K562 (cell line): ENCODE measurements at regions of chrX and their contacts with region 1.

Region 1: GRCh38 chrX:139967300-139967699 is 2.0 kb upstream of the CXorf66 start:
- DNase-seq: peak; percentile 20 to 37 (median 21)
- ATAC-seq: peak; percentile 67
- H3K4me3 ChIP-seq: no peak overlapping the region
- H3K27ac ChIP-seq: no peak overlapping the region
- H3K4me1 ChIP-seq: no peaks in the 10 kb centered on the region
- H3K27me3 ChIP-seq: no peaks in the 10 kb centered on the region
- CTCF ChIP-seq: peak in 2 of 3 experiments; percentile 50; a peak in 3 of 6 replicates
- EP300 ChIP-seq: no peak
- POLR2A ChIP-seq: no peak
- RAD21 ChIP-seq: peak in 1 of 2 experiments; percentile 39; a peak in 1 of 4 replicates

Region 2: DNA sequence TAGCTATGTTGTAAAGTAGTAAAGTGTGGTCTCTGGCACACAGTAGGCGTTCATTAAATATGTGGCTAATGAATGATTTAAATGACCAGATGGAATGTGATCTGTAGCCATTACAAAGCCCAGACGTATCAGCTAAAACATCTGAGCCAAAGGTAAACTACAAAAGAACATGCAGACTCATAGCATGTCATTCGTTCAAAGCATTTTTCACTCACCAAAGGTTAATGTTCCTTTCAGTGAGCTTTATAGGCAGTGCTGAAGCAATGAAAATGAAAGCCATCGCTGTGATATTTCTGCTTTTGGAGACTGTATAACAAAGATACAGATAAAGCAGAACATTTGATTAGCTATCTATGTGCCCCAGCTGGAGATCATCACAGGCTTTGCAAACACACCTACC is 386.2 kb before region 1 on chrX:
- CTCF ChIA-PET with region 1: no interaction called
- POLR2A ChIA-PET with region 1: no interaction called
- in situ Hi-C with region 1: no loop called
- intact Hi-C with region 1: loop called (anchors 10 kb)
- DNase-seq: no peak
- ATAC-seq: no peak
- H3K4me3 ChIP-seq: no peak overlapping the region
- H3K27ac ChIP-seq: no peak overlapping the region
- H3K4me1 ChIP-seq: no peaks in the 10 kb centered on the region
- H3K27me3 ChIP-seq: no peaks in the 10 kb centered on the region
- CTCF ChIP-seq: no peak
- EP300 ChIP-seq: no peak
- POLR2A ChIP-seq: no peak
- RAD21 ChIP-seq: no peak

Region 3: GRCh38 chrX:139691843-139692505 is 275.3 kb before region 1 on chrX:
- CTCF ChIA-PET with region 1: no interaction called
- POLR2A ChIA-PET with region 1: no interaction called
- in situ Hi-C with region 1: no loop called
- intact Hi-C with region 1: no loop called
- DNase-seq: no peak
- ATAC-seq: peak; percentile 60
- H3K4me3 ChIP-seq: no peak overlapping the region
- H3K27ac ChIP-seq: no peak overlapping the region
- H3K4me1 ChIP-seq: peaks cover 0 to 8% of the 10 kb centered on the region in 2 experiments; a peak in 2 of 5 replicates
- H3K27me3 ChIP-seq: peaks cover 5 to 25% of the 10 kb centered on the region in 2 experiments; a peak in 4 of 5 replicates
- CTCF ChIP-seq: no peak
- EP300 ChIP-seq: no peak
- POLR2A ChIP-seq: no peak
- RAD21 ChIP-seq: no peak

Region 4: GRCh38 chrX:141443922-141444321 is 1476.6 kb after region 1 on chrX:
- CTCF ChIA-PET with region 1: no interaction called
- POLR2A ChIA-PET with region 1: no interaction called
- in situ Hi-C with region 1: no loop called
- intact Hi-C with region 1: no loop called
- DNase-seq: no peak
- ATAC-seq: no peak
- H3K4me3 ChIP-seq: no peak overlapping the region
- H3K27ac ChIP-seq: no peak overlapping the region
- H3K4me1 ChIP-seq: no peaks in the 10 kb centered on the region
- H3K27me3 ChIP-seq: no peaks in the 10 kb centered on the region
- CTCF ChIP-seq: no peak
- EP300 ChIP-seq: no peak
- POLR2A ChIP-seq: no peak
- RAD21 ChIP-seq: no peak